HEK293 (cell line): ENCODE measurements at regions of chr1 and their contacts with region 1.

Region 1: DNA sequence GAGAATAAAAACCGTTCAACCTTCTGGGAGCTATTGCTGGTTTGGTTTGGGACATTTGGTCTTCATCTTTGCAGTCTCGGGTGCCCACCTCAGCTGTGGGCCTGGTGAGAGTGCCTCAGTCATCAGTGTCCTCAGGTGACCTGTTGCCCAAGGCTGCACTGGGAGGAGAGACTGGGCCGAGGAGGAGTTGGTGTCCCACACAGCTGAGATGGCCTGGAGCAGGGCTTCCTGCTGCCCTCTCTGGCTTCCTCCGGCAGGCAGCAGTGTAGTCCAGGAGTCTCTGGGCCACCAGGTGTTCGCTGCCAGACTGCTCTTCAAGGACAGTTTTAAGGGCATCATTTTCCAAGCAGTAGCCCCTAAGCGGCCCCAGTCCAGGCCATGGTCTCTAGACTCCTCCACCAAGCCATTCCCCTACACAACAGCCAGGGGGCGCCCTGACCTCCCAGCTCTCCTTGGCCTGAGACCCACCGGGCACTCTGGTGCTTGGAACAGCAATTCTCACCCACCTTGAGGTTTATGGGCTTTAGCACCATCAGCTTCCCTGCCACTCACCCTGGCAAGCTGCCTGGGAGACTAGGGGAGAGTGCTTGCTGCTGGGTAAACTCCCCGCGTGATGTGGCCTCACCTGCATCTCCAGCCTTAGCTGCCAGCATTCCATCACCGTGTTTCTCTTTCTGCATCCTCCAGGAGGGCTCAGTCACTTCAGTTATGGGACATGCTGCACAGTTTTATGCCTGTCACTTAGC is 9.1 kb upstream of the SYTL1 start:
- H3K4me3 ChIP-seq: no peak overlapping the region
- H3K27ac ChIP-seq: no peak overlapping the region
- H3K4me1 ChIP-seq: no peaks in the 10 kb centered on the region
- CTCF ChIP-seq: peak; percentile 79

Region 2: DNA sequence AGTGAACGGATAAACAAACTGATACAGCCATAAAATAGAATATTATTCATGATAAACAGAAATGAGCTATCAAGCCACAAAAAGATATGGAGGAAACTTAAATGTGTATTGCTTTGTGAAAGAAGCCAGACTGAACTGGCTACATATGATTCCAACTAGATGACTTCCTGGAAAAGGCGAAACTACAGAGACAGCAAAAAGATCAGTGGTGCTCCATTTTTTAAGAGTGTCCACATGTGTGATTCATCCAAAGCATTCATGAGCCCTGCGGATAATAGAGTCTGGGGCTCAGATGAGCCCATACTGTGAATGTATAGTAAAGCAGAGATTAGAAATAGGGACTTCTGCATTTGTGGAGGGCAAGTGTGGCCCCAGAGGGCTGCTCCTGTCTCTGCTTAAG is 18.5 kb before region 1 on chr1:
- CTCF ChIA-PET with region 1: interaction called, 12 read pairs
- POLR2A ChIA-PET with region 1: no interaction called
- H3K4me3 ChIP-seq: no peak overlapping the region
- H3K27ac ChIP-seq: no peak overlapping the region
- H3K4me1 ChIP-seq: no peaks in the 10 kb centered on the region
- CTCF ChIP-seq: no peak

Region 3: GRCh38 chr1:27321813-27322577 is 10.7 kb before region 1 on chr1 and contains the start of gene TMEM222:
- CTCF ChIA-PET with region 1: interaction called, 24 read pairs
- POLR2A ChIA-PET with region 1: no interaction called
- H3K4me3 ChIP-seq: peak within 1 kb of the TSS; percentile 88
- H3K27ac ChIP-seq: peak within 1 kb of the TSS; percentile 81
- H3K4me1 ChIP-seq: no peaks in the 10 kb centered on the region
- CTCF ChIP-seq: peak; percentile 61

Region 4: DNA sequence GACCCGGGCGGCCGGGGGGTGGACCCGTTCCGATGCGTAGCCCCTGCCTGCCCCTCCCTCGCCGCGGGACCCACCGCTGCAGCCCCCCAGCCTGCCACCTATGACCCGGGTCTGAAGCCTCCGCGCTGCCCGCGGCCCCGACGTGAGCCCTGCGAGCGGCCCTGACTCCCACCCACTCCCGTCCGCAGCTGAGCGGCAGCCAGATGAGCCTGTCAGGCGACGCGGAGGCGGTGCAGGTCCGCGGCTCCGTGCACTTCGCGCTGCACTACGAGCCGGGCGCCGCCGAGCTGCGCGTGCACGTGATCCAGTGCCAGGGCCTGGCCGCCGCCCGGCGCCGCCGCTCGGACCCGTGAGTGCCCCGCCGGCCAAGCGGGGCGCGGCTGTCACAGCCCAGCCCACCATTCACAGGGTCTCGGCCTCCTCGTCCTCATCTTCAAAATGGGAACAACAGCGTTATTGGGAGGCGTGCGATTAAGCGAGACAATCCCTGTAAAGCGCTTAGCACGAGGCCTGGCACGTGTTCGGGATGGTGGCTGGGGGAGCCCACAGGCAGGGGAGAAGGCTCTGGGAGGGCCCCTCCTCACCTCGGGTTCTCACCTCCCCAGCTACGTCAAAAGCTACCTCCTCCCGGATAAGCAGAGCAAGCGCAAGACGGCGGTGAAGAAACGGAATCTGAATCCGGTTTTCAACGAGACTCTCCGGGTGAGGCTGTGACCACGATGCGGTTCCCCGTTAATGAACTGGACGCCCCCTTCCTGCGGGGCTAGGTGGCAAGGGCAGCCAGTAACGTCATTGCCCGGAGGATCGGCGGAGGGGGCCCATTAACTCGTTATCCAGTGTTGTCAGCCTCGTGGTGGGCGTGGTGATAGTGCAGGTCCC is 17.3 kb after region 1 on chr1:
- CTCF ChIA-PET with region 1: interaction called, 39 read pairs
- POLR2A ChIA-PET with region 1: interaction called, 3 read pairs
- H3K4me3 ChIP-seq: no peak overlapping the region; the same call in 1 of the 2 replicates
- H3K27ac ChIP-seq: no peak overlapping the region
- H3K4me1 ChIP-seq: peaks cover 4% of the 10 kb centered on the region
- CTCF ChIP-seq: no peak

Region 5: DNA sequence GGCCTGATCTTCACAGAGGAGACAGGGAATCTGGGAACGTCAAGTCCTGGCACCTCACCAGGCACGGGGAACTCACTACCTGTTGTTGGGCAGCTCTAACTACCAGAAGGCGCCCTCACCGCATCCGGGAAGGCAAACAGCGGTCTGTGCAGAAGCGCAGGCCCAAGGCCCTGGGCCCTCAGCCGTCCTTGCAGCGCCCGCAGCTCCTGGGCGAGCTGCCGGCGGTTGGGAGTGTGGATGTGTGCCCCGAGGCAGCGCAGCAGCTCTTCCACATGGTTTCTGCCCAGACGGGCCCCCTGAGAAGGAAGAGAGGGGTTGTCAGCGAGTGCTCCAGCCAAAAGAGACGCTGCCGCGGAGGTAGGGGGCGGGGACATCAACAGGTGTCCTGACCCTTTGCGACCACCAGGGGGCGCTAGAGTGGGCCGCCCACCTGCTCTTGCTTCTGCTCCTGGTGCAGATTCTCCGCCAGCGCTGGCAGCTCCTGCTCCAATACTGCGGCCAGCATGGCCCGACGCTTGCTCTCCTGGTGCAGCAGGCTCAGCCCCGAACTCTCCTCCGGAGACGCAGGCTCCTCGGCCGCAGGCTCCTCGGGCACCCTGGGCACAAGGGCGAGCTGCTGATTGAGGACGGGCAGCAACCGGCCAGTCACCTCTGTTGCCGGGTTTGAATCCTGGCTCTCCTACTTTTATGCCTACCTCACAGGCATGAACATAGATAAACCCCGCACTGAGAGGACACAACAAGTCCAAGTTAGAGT is 24.8 kb after region 1 on chr1:
- CTCF ChIA-PET with region 1: interaction called, 39 read pairs
- POLR2A ChIA-PET with region 1: no interaction called
- H3K4me3 ChIP-seq: no peak overlapping the region
- H3K27ac ChIP-seq: no peak overlapping the region
- H3K4me1 ChIP-seq: no peaks in the 10 kb centered on the region
- CTCF ChIP-seq: peak; percentile 94

Region 6: DNA sequence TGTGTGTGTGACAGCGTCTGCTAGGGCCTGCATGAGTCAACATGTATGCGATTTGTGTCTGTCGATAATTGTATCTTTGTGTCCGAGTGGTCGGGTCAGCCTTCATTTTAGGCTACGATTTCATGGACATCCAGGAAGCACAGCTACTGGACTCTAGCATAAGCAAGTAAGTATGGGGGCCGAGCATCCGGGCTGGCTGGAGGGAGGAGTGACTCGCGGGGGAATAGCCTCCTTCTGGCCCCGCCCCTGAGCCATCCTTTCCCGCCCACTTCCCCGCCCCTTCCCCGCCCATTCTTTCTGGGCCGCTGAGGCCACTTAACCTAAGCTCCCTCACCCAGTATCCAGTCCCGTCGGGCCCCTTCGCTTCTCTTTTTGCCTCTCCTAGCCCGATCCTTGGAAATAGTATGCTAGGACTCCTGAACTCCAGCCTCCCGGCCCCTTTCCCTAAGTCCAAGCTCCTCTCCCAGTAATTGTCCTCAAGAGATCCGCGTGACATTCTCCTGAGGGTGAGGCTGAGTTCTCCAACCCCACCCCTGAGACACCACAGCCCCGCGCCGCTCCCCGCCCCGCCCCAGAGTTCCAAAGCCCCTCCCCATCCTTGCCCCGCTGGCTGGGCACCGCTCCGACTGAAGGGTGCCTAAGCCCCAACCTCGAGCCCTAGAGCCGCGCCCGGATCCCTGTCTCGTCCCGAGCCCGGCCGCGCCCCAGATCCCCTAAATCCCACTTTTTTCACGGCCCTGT is 32.8 kb after region 1 on chr1:
- CTCF ChIA-PET with region 1: interaction called, 10 read pairs
- POLR2A ChIA-PET with region 1: interaction called, 8 read pairs
- H3K4me3 ChIP-seq: peak overlapping the region; percentile 60
- H3K27ac ChIP-seq: peak overlapping the region; percentile 78
- H3K4me1 ChIP-seq: peaks cover 2% of the 10 kb centered on the region; the same call in 1 of the 2 replicates
- CTCF ChIP-seq: no peak

Region 7: DNA sequence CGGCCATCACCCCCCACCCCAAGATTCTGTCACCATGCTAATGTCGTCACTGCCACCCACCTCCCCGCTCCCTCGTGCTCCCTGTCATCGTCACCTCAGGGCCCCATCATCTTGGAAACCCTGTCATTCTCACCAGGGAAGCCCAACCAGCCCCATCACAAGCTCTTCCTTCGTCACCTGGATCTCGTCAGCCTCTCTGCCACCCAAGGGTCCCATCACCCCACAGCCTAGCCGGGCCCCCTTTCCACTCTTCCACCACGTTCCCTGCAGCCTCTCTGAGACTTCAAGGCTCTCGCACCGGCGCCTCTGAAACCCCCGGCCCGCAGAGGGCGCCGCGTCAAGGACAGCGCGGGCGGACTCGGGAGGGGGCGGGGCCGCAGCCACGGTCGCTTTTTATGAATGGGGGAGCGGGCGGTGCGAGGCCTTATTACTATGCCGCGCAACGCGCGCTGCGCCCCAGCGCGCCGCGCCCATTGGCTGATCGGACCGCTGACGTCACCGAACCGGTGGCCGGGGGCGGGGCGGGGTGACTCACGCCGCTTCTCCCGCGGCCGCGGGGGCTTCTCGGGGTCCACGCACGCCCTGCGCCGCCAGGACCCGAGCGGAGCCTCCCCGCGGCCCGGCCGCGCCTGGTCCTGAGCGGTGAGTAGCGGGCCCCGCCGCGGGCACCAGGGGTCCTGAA is 59.5 kb after region 1 on chr1 and contains the start of gene GPR3:
- CTCF ChIA-PET with region 1: interaction called, 20 read pairs
- POLR2A ChIA-PET with region 1: no interaction called
- H3K4me3 ChIP-seq: peak within 1 kb of the TSS; percentile 45
- H3K27ac ChIP-seq: no peak within 1 kb of the TSS
- H3K4me1 ChIP-seq: no peaks in the 10 kb centered on the region
- CTCF ChIP-seq: peak; percentile 83